Mammary epithelial cell (primary cell): ENCODE measurements at regions of chr17 and their contacts with region 1.

Region 1: DNA sequence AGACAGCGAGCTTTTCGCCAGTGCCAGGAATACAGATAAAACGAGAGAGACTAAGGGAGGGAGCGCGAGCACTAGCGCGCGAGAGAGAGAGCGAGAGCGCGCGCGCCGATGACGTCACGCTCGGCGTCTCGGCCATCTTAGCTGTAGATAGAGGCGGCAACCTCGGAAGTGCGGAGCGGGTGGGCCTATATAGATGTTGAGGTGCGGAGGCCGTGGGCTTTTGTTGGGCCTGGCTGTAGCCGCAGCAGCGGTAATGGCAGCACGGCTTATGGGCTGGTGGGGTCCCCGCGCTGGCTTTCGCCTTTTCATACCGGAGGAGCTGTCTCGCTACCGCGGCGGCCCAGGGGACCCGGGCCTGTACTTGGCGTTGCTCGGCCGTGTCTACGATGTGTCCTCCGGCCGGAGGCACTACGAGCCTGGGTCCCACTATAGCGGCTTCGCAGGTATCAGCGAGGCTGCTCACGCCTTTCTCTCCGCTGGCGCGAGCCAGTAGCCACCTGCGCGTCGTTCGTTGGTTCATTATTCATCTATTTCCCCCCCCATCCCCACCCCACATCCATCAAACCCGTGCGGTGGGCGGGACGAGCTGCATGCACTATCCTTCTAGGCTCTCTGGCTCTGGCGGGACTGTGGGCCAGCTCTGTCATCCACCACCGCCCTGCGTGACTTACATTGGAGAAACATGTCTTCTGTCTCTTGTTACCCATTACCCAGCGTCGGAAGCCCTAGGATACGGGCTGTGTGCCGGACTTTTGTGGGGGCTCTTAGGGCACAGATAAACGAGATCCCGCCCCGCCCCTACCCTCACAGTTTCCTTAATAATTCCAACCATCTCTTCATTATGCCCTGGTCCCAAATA is 795 bp downstream of the CYB5D2 start:
- DNase-seq: peak; percentile 88
- H3K4me3 ChIP-seq: peak overlapping the region; percentile 69 to 82 (median 73)
- H3K27ac ChIP-seq: peak overlapping the region; percentile 88
- H3K4me1 ChIP-seq: peaks cover 7% of the 10 kb centered on the region
- H3K27me3 ChIP-seq: no peaks in the 10 kb centered on the region
- CTCF ChIP-seq: no peak

Region 2: DNA sequence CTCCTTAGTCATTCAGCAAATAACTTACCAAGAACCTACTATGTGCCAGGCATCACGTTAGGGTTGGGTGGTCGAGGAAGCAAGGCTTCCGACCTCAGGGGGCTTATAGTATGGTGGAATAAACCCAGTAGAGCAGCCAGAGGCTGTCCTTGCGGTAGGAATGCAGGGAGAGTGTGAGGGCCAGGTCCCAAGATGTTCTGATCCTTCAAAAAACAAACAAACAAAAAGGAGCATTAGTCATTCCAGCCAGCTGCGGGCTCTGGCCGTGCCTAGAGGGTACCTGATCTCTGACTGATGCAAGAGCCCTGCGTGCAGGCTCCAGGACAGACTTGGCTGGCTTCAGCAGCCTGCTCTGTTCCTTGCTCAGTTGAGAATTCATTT is 17.4 kb after region 1 on chr17:
- CTCF ChIA-PET with region 1: no interaction called
- dilution Hi-C with region 1: no loop called
- in situ Hi-C with region 1: no loop called
- intact Hi-C with region 1: loop called (anchors 1 kb)
- DNase-seq: peak; percentile 90
- H3K4me3 ChIP-seq: no peak overlapping the region
- H3K27ac ChIP-seq: peak overlapping the region; percentile 68
- H3K4me1 ChIP-seq: peaks cover 37% of the 10 kb centered on the region
- H3K27me3 ChIP-seq: no peaks in the 10 kb centered on the region
- CTCF ChIP-seq: peak; percentile 29 to 57

Region 3: DNA sequence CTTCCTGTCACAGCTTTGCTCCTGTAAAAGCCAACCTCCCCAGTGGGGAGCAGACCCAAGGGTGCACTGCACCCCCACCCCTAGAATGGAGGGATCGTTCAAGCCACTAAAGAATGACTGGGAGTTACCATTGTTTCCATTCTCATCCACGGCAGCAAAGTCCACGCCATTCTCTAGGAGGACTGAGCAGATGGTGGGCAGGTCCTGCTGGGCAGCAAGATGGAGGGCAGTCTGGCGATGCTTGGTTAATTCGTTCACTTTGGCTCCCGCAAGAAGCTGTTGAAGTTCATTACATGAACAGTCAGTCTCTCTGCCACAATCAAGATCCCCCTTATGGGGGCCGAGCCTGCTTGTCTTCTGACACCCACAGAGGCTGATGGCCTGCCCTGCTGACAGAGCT is 30.0 kb after region 1 on chr17:
- CTCF ChIA-PET with region 1: no interaction called
- dilution Hi-C with region 1: no loop called
- in situ Hi-C with region 1: no loop called
- intact Hi-C with region 1: no loop called
- DNase-seq: no peak
- H3K4me3 ChIP-seq: no peak overlapping the region
- H3K27ac ChIP-seq: no peak overlapping the region
- H3K4me1 ChIP-seq: no peaks in the 10 kb centered on the region
- H3K27me3 ChIP-seq: no peaks in the 10 kb centered on the region
- CTCF ChIP-seq: no peak

Region 4: DNA sequence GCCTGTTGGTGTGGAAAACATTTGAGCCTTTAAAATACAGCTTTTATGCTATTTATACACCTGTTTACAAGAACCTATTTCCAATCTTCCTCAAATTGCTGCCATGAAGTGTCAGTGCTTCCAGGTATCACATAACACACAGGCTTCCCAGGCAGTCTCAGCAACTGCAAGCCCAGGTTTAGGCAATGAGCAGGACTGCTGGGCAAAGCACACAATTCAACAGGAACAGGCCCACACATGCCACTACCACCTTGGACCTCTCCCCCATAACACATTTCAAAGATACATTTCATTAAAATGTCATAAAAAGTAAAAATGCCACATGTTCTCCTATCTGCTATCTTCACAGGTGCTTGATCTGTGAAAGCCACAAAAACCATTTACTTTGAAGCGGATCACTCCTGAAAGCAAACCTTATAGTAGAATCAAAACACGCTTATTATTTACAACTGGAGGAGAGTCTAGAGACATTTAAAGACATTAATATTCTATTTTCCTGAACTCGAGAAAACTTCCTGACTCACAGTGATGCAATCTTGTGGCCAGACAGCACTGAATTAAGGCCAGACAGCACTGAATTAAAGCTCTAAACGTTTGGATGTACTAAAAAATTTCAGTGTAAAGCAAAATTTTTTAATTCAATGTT is 88.5 kb after region 1 on chr17:
- CTCF ChIA-PET with region 1: no interaction called
- dilution Hi-C with region 1: no loop called
- in situ Hi-C with region 1: no loop called
- intact Hi-C with region 1: no loop called
- DNase-seq: peak; percentile 74
- H3K4me3 ChIP-seq: no peak overlapping the region
- H3K27ac ChIP-seq: peak overlapping the region; percentile 76
- H3K4me1 ChIP-seq: peaks cover 45% of the 10 kb centered on the region
- H3K27me3 ChIP-seq: no peaks in the 10 kb centered on the region
- CTCF ChIP-seq: no peak